GM12878 (cell line): ENCODE measurements at regions of chr6 and their contacts with region 1.

Region 1: GRCh38 chr6:81792826-81793225 is 40.3 kb upstream of the TENT5A start:
- DNase-seq: no peak
- ATAC-seq: no peak
- H3K4me3 ChIP-seq: no peak overlapping the region
- H3K27ac ChIP-seq: no peak overlapping the region
- H3K4me1 ChIP-seq: no peaks in the 10 kb centered on the region
- H3K27me3 ChIP-seq: no peaks in the 10 kb centered on the region
- CTCF ChIP-seq: no peak
- EP300 ChIP-seq: no peak
- POLR2A ChIP-seq: no peak
- RAD21 ChIP-seq: no peak

Region 2: GRCh38 chr6:81655696-81656095 is 137.1 kb before region 1 on chr6:
- CTCF ChIA-PET with region 1: no interaction called
- POLR2A ChIA-PET with region 1: no interaction called
- RAD21 ChIA-PET with region 1: no interaction called
- SMC1A ChIA-PET with region 1: no interaction called
- in situ Hi-C with region 1: no loop called
- intact Hi-C with region 1: no loop called
- DNase-seq: no peak
- ATAC-seq: no peak
- H3K4me3 ChIP-seq: no peak overlapping the region
- H3K27ac ChIP-seq: no peak overlapping the region
- H3K4me1 ChIP-seq: no peaks in the 10 kb centered on the region
- H3K27me3 ChIP-seq: no peaks in the 10 kb centered on the region
- CTCF ChIP-seq: no peak
- EP300 ChIP-seq: no peak
- POLR2A ChIP-seq: no peak
- RAD21 ChIP-seq: no peak

Region 3: GRCh38 chr6:81818901-81819361 is 26.1 kb after region 1 on chr6:
- CTCF ChIA-PET with region 1: interaction called, 3 read pairs
- POLR2A ChIA-PET with region 1: interaction called, 10 read pairs
- RAD21 ChIA-PET with region 1: no interaction called
- SMC1A ChIA-PET with region 1: interaction called, 4 read pairs
- in situ Hi-C with region 1: no loop called
- intact Hi-C with region 1: no loop called
- DNase-seq: peak; percentile 25
- ATAC-seq: peak; percentile 32; the same call in 2 of the 3 replicates
- H3K4me3 ChIP-seq: no peak overlapping the region
- H3K27ac ChIP-seq: no peak overlapping the region
- H3K4me1 ChIP-seq: no peaks in the 10 kb centered on the region
- H3K27me3 ChIP-seq: no peaks in the 10 kb centered on the region
- CTCF ChIP-seq: no peak
- EP300 ChIP-seq: no peak
- POLR2A ChIP-seq: no peak
- RAD21 ChIP-seq: no peak